A549 (cell line): ENCODE measurements at regions of chr11 and their contacts with region 1.

Region 1: DNA sequence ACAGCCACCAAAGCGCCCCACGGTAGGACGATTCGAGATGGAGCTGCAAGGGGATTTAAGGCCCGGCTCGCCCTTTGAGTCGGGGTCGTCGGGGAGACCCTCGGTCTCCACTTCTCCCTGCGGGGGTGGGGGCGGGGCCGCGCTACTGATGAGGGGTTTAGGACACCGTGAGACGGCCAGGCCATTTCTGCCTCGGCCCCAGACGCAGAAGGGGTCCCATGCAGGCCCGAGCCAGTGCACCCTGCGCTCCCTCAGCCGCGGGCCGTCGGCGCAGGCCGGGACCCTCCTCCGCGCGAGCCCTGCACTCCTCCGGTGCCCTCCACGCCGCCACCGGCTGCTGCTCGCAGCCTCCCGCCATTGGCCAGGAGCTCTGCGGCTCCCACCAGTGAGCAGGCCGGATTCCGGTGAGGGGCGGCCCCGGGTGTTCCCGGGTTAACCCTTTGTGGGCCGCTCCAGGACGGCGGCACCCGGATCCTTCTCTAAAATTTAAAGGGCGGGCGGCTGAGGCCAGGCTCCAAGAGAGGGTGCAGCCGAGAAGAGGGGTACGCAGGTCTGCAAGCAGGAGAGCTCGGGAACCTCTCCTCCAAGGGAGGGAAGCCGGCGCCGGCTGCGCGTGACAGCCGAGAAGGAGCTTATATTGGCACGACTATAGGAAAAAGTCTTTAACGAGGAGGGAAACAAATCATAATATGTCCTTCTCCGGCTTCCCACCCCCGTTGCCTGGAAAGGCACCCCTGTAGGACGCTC is 18.0 kb downstream of the CREB3L1 start:
- DNase-seq: no peak
- ATAC-seq: peak; percentile 32 to 76; a peak in 4 of 6 replicates
- H3K4me3 ChIP-seq: peak overlapping the region; percentile 38
- H3K27ac ChIP-seq: peak overlapping the region; percentile 48 to 84; a peak in 5 of 6 replicates
- H3K4me1 ChIP-seq: peaks cover 70% of the 10 kb centered on the region
- CTCF ChIP-seq: no peak
- EP300 ChIP-seq: no peak
- POLR2A ChIP-seq: peak; percentile 50
- RAD21 ChIP-seq: no peak

Region 2: DNA sequence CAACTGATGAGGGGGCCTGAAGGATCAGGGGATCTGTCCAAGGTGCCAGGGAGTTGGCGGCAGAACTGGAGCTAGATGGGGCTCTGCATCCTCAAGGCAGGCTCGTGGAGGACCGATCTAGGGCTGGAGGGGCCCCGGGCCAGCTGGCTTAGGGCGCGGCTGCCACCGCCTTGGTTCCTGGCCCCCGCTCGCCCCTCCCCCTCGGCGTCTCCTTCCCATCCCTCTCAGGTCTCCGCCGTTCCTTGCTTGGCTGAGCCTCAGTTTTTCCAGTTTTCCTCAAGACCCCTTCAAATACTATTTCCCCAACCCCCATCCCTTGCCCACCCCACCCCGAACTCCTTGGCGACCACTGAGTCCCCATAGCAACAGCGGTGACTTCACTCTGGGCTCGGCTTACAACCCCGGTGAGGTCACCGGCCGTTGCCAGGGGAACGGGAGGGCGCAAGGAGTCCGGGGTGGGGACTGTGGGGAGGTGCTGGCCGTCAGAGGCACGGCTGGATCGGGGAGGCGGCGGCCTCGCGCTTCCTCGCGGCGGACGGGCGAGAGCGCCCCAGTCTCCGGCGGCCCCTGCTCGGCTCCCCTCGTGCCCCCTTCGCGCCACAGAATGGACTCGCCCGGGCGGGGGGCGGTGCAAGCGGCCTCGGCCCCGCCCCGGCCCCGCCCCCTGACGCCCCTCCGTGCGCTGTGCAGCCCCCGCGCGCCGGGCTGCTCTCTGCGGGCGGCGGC is 395.9 kb before region 1 on chr11:
- CTCF ChIA-PET with region 1: no interaction called
- POLR2A ChIA-PET with region 1: no interaction called
- DNase-seq: peak; percentile 82 to 85
- ATAC-seq: peak; percentile 69 to 83
- H3K4me3 ChIP-seq: peak overlapping the region; percentile 57
- H3K27ac ChIP-seq: peak overlapping the region; percentile 86 to 89
- H3K4me1 ChIP-seq: peaks cover 12% of the 10 kb centered on the region; the same call in 2 of the 3 replicates
- CTCF ChIP-seq: no peak
- EP300 ChIP-seq: no peak
- POLR2A ChIP-seq: no peak
- RAD21 ChIP-seq: no peak

Region 3: DNA sequence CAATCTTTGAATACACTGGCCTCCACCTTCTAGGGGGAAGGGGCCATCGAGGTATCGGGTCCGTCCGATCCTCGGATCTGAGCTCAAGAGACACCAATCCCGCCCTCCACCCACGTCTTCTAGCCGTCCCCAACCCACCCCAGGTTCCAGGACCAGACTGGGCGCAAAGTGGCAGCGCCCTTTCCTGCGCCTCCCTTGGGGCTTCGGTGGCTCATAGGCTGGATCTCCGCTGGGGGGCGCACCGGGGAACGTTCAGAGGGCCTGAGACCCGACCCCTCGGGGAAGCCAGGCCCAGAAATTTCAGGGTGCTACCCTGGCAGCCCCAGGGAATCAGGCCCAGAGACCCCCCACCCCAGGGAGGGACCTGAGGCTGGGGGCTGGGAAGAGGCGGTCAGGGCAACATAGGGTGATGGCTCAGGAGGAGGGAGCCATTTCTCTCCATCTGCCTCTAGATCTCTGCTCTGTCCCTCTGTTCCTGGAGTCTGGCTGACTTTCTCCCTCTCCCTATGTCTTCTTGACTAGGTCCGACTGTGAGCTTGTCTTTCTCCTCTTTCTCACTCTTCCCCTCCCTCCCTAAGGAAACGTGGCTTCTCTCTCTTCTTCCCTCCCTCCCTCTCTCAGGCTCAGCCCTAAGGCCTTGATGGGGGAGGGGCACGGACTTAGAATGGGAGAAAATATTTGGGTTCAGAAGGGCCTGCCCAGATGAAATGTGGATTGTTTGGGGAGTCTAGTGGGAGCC is 16.9 kb before region 1 on chr11:
- CTCF ChIA-PET with region 1: interaction called, 42 read pairs
- POLR2A ChIA-PET with region 1: interaction called, 3 read pairs
- DNase-seq: no peak
- ATAC-seq: peak; percentile 49 to 75; a peak in 5 of 6 replicates
- H3K4me3 ChIP-seq: peak overlapping the region; percentile 53
- H3K27ac ChIP-seq: peak overlapping the region in 1 of 2 experiments; percentile 79; a peak in 3 of 6 replicates
- H3K4me1 ChIP-seq: peaks cover 43% of the 10 kb centered on the region
- CTCF ChIP-seq: peak; percentile 41
- EP300 ChIP-seq: no peak
- POLR2A ChIP-seq: no peak
- RAD21 ChIP-seq: peak; percentile 17 to 19; a peak in 2 of 5 replicates

Region 4: DNA sequence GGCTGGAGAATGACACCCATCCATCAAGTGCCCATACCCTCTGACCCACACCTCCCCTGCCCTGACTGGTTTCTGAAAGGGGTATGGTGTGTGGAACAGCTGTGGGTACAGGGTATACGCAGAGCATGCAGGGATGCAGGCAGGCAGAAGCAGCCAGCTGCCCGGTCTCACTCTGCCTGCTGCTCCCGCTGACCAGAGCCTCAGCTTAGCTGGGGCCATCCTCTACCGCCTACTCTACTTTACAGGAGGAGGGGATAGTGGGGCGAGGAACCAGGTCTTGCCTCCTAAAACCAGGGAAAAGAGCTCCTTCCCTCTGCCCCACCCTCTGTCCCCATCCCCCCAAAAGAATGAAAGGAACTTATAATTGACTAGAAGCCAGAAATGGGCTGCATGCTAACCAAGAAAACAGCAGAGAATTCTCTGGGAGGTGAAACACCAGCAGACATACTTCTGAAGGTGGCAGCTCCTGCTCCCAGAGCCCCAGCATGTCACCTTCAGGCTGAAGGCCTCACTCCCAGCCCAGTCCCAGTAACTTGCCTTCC is 109.1 kb after region 1 on chr11:
- CTCF ChIA-PET with region 1: no interaction called
- POLR2A ChIA-PET with region 1: no interaction called
- DNase-seq: no peak
- ATAC-seq: peak in 1 of 2 experiments; percentile 16; a peak in 2 of 6 replicates
- H3K4me3 ChIP-seq: no peak overlapping the region
- H3K27ac ChIP-seq: no peak overlapping the region
- H3K4me1 ChIP-seq: no peaks in the 10 kb centered on the region
- CTCF ChIP-seq: no peak
- EP300 ChIP-seq: no peak
- POLR2A ChIP-seq: no peak
- RAD21 ChIP-seq: no peak